ENCODE measurements at regions of chr2 and their contacts with region 1.

Region 1: DNA sequence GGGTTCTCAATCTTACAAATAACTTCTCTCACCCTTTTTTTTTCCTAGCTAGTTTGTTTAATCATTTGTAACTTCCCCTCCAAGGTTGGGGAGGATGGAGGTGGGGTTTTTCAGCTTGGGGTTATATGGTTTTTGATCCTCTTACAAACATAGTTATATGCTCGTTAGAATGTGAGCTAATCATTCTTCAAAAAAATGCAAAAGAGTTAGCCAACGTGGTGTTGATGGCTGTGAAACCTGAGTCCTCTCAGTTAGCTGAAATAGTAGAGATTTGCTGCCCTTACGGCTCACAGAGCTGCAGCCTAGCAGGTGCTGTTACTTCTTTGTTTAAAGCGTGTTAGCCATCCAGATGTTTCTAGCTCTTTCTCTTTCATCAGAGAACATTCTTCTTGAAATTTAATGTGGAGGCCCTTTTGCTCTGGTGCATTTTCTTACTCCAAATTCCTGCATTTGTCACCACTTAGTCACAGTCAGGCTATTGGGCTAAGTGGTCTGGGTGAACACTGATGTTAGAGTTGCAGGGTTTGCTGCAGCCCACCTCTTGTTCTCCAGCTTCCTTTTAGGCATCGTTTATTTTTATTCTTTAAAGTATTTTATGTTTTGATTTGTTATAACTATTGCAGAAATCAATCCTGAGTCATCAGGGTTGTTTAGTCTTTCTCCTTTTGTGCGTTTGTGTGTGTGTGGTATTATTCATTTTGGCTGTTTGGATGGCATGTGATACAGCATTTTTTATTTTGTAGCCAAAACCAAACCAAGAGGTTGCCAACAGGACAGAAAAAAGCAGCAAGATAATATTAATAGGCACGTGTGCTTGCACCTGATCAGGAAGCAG is 41.1 kb downstream of the LIMS1 start:
- DNase-seq: no peak
- ATAC-seq: no peak
- H3K4me3 ChIP-seq: no peak overlapping the region
- H3K27ac ChIP-seq: no peak overlapping the region
- H3K4me1 ChIP-seq: peaks cover 82% of the 10 kb centered on the region
- H3K27me3 ChIP-seq: no peaks in the 10 kb centered on the region
- CTCF ChIP-seq: no peak

Region 2: GRCh38 chr2:108534584-108535230 is 40.6 kb before region 1 on chr2:
- CTCF ChIA-PET with region 1: no interaction called
- POLR2A ChIA-PET with region 1: interaction called, 3 read pairs
- in situ Hi-C with region 1: no loop called
- intact Hi-C with region 1: loop called (anchors 5 kb)
- DNase-seq: no peak
- ATAC-seq: no peak
- H3K4me3 ChIP-seq: peak overlapping the region; percentile 73 to 74
- H3K27ac ChIP-seq: peak overlapping the region; percentile 80
- H3K4me1 ChIP-seq: peaks cover 45% of the 10 kb centered on the region
- H3K27me3 ChIP-seq: no peaks in the 10 kb centered on the region
- CTCF ChIP-seq: no peak

Region 3: GRCh38 chr2:108548208-108549003 is 26.9 kb before region 1 on chr2:
- CTCF ChIA-PET with region 1: interaction called, 11 read pairs
- POLR2A ChIA-PET with region 1: no interaction called
- in situ Hi-C with region 1: no loop called
- intact Hi-C with region 1: no loop called
- DNase-seq: no peak
- ATAC-seq: no peak
- H3K4me3 ChIP-seq: no peak overlapping the region
- H3K27ac ChIP-seq: no peak overlapping the region
- H3K4me1 ChIP-seq: peaks cover 2% of the 10 kb centered on the region; the same call in 1 of the 2 replicates
- H3K27me3 ChIP-seq: no peaks in the 10 kb centered on the region
- CTCF ChIP-seq: no peak